ENCODE measurements at regions of chr11 and their contacts with region 1.

Region 1: GRCh38 chr11:17760102-17761029 is 25.8 kb downstream of the KCNC1 start:
- DNase-seq: peak; percentile 68 to 75
- H3K4me3 ChIP-seq: no peak overlapping the region
- H3K4me3 Mint-ChIP-seq: no peak overlapping the region
- H3K27ac Mint-ChIP-seq: no peak overlapping the region
- H3K4me1 ChIP-seq: no peaks in the 10 kb centered on the region
- H3K4me1 Mint-ChIP-seq: no peaks in the 10 kb centered on the region
- H3K27me3 ChIP-seq: no peaks in the 10 kb centered on the region
- H3K27me3 Mint-ChIP-seq: peaks cover 10% of the 10 kb centered on the region
- CTCF ChIP-seq: peak; percentile 78 to 87

Region 2: GRCh38 chr11:17743808-17744119 is 16.6 kb before region 1 on chr11:
- CTCF ChIA-PET with region 1: no interaction called
- POLR2A ChIA-PET with region 1: no interaction called
- intact Hi-C with region 1: no loop called
- DNase-seq: no peak
- H3K4me3 ChIP-seq: no peak overlapping the region
- H3K4me3 Mint-ChIP-seq: no peak overlapping the region
- H3K27ac Mint-ChIP-seq: no peak overlapping the region
- H3K4me1 ChIP-seq: no peaks in the 10 kb centered on the region
- H3K4me1 Mint-ChIP-seq: no peaks in the 10 kb centered on the region
- H3K27me3 ChIP-seq: no peaks in the 10 kb centered on the region; the same call in 1 of the 2 replicates
- H3K27me3 Mint-ChIP-seq: peaks cover 20% of the 10 kb centered on the region
- CTCF ChIP-seq: no peak

Region 3: GRCh38 chr11:17827006-17827405 is 66.6 kb after region 1 on chr11:
- CTCF ChIA-PET with region 1: no interaction called
- POLR2A ChIA-PET with region 1: no interaction called
- intact Hi-C with region 1: loop called (anchors 1 kb)
- DNase-seq: peak in 1 of 2 experiments; percentile 10
- H3K4me3 ChIP-seq: no peak overlapping the region
- H3K4me3 Mint-ChIP-seq: no peak overlapping the region
- H3K27ac Mint-ChIP-seq: no peak overlapping the region
- H3K4me1 ChIP-seq: no peaks in the 10 kb centered on the region
- H3K4me1 Mint-ChIP-seq: no peaks in the 10 kb centered on the region
- H3K27me3 ChIP-seq: no peaks in the 10 kb centered on the region
- H3K27me3 Mint-ChIP-seq: no peaks in the 10 kb centered on the region
- CTCF ChIP-seq: peak in 1 of 2 experiments; percentile 56

Region 4: DNA sequence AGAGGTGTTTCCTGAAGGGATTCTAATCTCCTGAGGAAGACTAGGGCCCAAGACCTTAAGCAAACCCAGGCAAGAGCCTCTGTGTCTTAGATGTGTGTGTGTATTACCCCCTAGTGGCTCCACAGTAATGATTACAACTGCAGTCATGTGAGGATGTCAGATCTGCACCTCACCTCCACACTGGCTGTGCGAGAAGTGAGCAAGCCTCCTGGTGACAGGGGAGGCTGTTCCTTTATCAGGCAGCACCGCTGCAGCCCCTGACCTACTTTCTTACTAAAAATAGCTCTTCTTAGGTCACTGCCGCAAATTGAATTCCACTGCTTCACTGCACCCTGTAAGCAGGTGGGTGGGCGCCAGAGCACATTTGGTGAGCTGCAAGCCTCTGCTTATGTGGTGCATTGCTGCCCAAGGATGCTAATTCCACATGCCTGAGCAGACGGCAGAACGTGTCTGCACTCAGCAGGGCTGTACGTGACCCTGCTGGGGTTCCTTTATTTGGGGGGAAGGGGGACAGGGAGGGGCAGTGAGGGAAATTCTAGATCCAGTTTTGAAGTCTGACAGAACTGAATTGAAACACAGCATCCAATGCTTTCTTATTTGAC is 86.6 kb after region 1 on chr11:
- CTCF ChIA-PET with region 1: no interaction called
- POLR2A ChIA-PET with region 1: no interaction called
- intact Hi-C with region 1: loop called (anchors 1 kb)
- DNase-seq: peak in 1 of 2 experiments; percentile 8
- H3K4me3 ChIP-seq: no peak overlapping the region
- H3K4me3 Mint-ChIP-seq: no peak overlapping the region
- H3K27ac Mint-ChIP-seq: no peak overlapping the region
- H3K4me1 ChIP-seq: no peaks in the 10 kb centered on the region
- H3K4me1 Mint-ChIP-seq: no peaks in the 10 kb centered on the region
- H3K27me3 ChIP-seq: no peaks in the 10 kb centered on the region
- H3K27me3 Mint-ChIP-seq: no peaks in the 10 kb centered on the region
- CTCF ChIP-seq: peak in 1 of 2 experiments; percentile 23

Region 5: DNA sequence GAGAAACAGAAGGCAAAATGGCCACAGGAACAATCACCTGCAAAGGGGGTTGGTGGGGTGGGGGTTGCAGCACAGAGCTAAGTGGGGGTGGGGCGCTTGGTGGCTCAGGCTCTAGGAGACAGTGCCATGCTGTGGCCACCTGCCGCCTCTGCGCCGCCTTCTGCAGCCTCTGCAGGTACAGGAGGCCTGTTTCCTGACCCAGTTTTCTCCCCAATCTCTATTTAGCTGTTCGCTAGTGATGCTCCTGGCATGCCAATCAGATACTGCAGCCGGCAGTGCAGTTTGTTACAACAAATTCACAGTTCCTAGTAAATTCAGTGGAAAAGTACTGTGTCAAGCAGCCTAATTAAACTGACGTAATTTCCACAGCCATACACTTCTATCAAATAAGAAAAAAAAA is 146.1 kb after region 1 on chr11:
- CTCF ChIA-PET with region 1: interaction called, 4 read pairs
- POLR2A ChIA-PET with region 1: no interaction called
- intact Hi-C with region 1: loop called (anchors 1 kb)
- DNase-seq: peak; percentile 44 to 67
- H3K4me3 ChIP-seq: no peak overlapping the region
- H3K4me3 Mint-ChIP-seq: no peak overlapping the region
- H3K27ac Mint-ChIP-seq: no peak overlapping the region
- H3K4me1 ChIP-seq: no peaks in the 10 kb centered on the region
- H3K4me1 Mint-ChIP-seq: no peaks in the 10 kb centered on the region
- H3K27me3 ChIP-seq: no peaks in the 10 kb centered on the region
- H3K27me3 Mint-ChIP-seq: no peaks in the 10 kb centered on the region
- CTCF ChIP-seq: peak; percentile 56 to 72

Region 6: DNA sequence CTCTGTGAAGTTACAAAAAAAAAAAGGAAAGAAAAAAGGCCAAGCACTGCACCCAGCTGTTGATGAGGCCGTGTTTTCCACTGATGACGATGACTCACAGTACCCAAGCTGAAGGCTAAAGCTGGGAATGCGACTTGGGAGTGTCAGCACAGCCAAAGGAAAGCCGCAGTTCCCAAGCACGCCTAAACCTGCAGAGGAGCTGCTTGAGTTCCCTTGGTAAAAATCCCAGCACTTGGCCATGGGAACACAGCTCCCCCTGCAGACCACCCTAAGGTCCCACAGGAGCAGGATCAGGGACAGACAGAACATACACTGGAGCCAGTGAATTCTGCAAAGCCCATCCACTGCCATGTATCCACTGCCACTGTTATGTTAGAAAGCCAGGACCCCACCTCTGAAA is 212.6 kb after region 1 on chr11:
- CTCF ChIA-PET with region 1: interaction called, 11 read pairs
- POLR2A ChIA-PET with region 1: no interaction called
- intact Hi-C with region 1: loop called (anchors 1 kb)
- DNase-seq: peak; percentile 51 to 65
- H3K4me3 ChIP-seq: no peak overlapping the region
- H3K4me3 Mint-ChIP-seq: no peak overlapping the region
- H3K27ac Mint-ChIP-seq: no peak overlapping the region
- H3K4me1 ChIP-seq: no peaks in the 10 kb centered on the region
- H3K4me1 Mint-ChIP-seq: no peaks in the 10 kb centered on the region
- H3K27me3 ChIP-seq: no peaks in the 10 kb centered on the region
- H3K27me3 Mint-ChIP-seq: no peaks in the 10 kb centered on the region
- CTCF ChIP-seq: peak; percentile 41 to 75

Region 7: DNA sequence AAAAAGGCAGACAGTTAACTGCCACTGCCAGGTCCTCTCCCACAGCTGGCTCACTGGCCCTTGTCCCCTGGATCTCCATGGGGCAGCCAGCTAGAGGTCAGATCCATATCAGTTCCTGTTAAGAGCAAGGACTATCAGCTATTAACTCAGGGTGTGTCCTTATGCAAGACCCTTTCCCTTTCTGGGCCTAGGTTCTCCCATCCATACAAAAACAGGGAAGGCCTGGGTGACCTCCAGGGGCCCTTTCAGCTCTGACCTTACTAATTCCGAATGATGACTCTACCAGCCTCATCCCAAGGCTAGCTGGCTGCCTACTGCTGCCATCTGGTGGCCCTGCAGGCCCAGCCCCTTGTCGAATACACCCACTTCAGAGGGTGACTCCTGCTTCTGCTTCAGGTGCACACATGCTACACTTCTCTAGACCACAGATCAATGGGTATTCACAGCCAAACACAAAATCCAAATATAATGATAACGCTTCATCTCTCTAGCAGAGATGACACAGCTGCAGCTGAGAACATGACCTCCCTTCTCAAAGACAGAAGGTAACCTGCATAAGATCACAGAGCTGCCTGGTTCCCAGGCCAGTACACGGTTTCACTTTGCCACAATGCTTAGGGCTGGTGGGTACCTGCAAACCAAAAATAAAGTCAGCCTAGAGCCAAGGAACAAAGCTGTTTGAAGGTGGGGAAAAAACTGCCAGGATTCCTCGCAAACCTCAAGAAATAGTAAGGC is 218.4 kb after region 1 on chr11:
- CTCF ChIA-PET with region 1: interaction called, 11 read pairs
- POLR2A ChIA-PET with region 1: no interaction called
- intact Hi-C with region 1: loop called (anchors 1 kb)
- DNase-seq: peak; percentile 69 to 73
- H3K4me3 ChIP-seq: no peak overlapping the region
- H3K4me3 Mint-ChIP-seq: no peak overlapping the region
- H3K27ac Mint-ChIP-seq: no peak overlapping the region
- H3K4me1 ChIP-seq: no peaks in the 10 kb centered on the region
- H3K4me1 Mint-ChIP-seq: no peaks in the 10 kb centered on the region
- H3K27me3 ChIP-seq: no peaks in the 10 kb centered on the region
- H3K27me3 Mint-ChIP-seq: no peaks in the 10 kb centered on the region
- CTCF ChIP-seq: peak; percentile 79 to 96

Region 8: DNA sequence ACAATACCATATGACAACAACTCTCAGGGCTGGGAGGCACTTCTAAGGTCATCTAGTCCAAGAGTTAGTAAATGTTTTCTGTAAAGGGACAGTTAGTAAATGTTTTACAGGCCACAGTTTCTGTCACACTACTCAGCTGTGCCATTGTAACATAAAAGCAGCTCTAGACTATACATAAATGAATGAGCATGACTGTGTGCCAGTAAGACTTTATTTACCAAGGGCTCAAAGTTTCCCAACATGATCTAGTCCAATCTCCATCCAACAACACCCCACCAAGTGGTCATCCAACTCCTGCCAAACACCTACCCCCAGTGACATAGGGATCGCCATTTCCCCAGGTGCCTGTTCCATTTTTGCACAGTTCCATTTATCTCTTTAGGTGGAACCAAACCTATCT is 240.4 kb after region 1 on chr11:
- CTCF ChIA-PET with region 1: no interaction called
- POLR2A ChIA-PET with region 1: no interaction called
- intact Hi-C with region 1: no loop called
- DNase-seq: no peak
- H3K4me3 ChIP-seq: no peak overlapping the region
- H3K4me3 Mint-ChIP-seq: no peak overlapping the region
- H3K27ac Mint-ChIP-seq: no peak overlapping the region
- H3K4me1 ChIP-seq: no peaks in the 10 kb centered on the region
- H3K4me1 Mint-ChIP-seq: peaks cover 7% of the 10 kb centered on the region
- H3K27me3 ChIP-seq: no peaks in the 10 kb centered on the region
- H3K27me3 Mint-ChIP-seq: no peaks in the 10 kb centered on the region
- CTCF ChIP-seq: no peak

Measured in Caco-2 (cell line).